ENCODE measurements at regions of chr16 and their contacts with region 1.

Region 1: DNA sequence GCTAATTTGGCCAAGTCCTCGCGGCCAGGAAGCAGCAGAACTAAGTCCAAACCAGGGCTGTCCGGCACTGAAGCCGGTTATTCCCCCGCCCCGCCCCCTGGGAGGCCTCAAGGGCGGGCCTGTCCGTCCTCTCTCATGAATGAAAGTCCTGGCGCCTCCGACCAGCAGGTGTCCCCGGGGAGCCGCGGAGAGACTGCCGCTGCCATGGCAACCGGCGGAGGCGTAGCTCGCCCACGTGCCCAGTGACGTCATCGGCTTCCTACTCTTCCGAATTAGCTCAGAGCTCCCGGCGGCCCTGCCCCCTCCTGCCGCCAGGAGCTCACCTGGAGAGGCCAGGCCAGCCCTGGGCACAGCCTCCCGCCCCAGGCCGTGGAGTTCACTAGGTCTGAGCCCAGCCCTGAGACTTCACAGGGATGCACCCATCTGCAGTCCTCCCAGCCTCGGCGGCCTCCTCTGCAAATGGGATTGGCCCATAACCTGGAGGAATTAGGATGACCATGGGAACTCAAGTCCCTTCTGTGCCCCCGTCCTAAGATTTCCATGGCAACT is 1.3 kb downstream of the SPATA2L start:
- DNase-seq: peak; percentile 99
- H3K4me3 Mint-ChIP-seq: peak overlapping the region; percentile 86
- H3K27ac Mint-ChIP-seq: peak overlapping the region; percentile 87
- H3K4me1 Mint-ChIP-seq: peaks cover 14% of the 10 kb centered on the region
- H3K27me3 Mint-ChIP-seq: no peaks in the 10 kb centered on the region

Region 2: GRCh38 chr16:89241187-89242007 is 458.8 kb before region 1 on chr16:
- intact Hi-C with region 1: loop called (anchors 10 kb)
- DNase-seq: peak; percentile 93
- H3K4me3 Mint-ChIP-seq: peak overlapping the region; percentile 100
- H3K27ac Mint-ChIP-seq: peak overlapping the region; percentile 100
- H3K4me1 Mint-ChIP-seq: peaks cover 15% of the 10 kb centered on the region
- H3K27me3 Mint-ChIP-seq: no peaks in the 10 kb centered on the region

Region 3: DNA sequence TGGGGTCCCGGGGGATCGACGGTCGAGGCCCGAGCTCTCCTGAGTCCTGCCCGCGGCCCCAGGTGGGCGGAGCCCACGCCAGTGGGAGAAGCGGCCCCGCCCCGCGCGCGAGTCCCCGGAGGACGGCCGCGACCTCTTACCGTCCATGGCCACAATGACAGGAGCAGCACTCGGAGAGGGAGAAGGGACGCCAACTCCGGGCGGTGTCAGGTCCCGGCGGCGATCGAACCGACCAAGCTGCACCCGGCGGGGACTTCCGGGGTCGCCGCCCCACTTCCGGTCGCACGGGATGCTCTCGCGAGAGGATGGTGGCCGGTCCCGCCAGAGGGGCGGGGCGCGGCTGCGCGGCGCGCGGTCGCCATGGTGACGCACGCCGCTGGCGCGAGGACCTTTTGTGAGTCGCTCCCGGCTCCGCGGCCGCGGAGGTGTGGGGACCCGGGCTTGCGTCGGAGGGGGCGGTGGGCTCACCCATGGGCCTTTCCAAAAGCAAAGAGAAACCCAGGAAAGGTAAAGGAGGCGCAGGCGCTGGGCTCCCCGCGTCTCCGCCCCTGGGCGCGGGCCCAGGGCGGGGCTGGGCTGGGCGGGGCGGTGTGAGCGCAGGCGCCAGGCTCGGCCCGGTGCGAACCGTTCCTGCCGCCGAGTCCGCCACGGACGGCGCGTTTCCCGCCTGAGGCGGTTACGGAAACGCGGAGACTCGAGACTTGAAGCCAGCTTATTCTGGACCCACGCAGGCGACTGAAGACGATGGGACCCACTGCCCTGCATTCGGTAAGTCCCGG is 42.5 kb before region 1 on chr16 and contains the starts of genes CHMP1A and SPATA33:
- intact Hi-C with region 1: loop called (anchors 1 kb)
- DNase-seq: peak; percentile 98
- H3K4me3 Mint-ChIP-seq: peak within 1 kb of the TSS; percentile 97
- H3K27ac Mint-ChIP-seq: peak within 1 kb of the TSS; percentile 92
- H3K4me1 Mint-ChIP-seq: peaks cover 33% of the 10 kb centered on the region
- H3K27me3 Mint-ChIP-seq: no peaks in the 10 kb centered on the region
- total RNA-seq, gene CHMP1A: 83.7 and 84.3 TPM in 2 replicates
- total RNA-seq, gene SPATA33: 14.6 and 17.2 TPM in 2 replicates

Region 4: DNA sequence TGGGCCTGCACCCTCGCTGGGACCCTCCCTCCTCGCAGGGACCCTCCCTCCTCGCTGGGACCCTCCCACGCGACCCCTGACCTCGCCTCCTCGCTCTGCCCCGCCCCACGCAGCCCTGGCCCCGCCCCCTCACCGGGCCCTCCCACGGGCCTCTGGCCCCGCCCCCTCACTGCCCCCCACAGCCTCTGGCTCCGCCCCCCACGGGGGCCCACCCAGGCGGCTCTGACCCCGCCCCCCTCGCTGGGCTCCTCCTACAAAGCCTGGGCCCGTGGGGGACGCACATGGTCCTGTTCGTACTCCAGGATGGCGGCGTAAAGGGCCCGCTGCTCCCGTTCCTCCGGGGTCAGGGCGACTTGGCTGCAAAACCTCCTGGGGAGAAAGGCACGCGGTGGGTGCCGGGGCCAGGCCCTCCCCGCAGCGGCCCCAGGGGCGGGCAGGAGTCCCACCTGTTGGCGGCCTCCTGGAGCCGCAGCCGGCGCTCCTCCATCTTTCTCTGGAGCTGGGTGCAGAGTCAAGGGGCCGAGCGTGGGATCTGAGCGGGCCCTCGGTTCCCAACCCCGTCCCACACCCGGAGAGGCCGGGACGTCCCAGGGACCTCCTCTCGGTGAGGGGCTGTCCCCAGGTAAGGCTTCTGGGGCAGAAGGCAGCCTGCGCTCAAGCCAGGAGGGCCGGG is 11.6 kb after region 1 on chr16:
- intact Hi-C with region 1: loop called (anchors 1 kb)
- DNase-seq: peak; percentile 93
- H3K4me3 Mint-ChIP-seq: peak overlapping the region; percentile 85
- H3K27ac Mint-ChIP-seq: peak overlapping the region; percentile 85
- H3K4me1 Mint-ChIP-seq: peaks cover 4% of the 10 kb centered on the region
- H3K27me3 Mint-ChIP-seq: no peaks in the 10 kb centered on the region

Region 5: DNA sequence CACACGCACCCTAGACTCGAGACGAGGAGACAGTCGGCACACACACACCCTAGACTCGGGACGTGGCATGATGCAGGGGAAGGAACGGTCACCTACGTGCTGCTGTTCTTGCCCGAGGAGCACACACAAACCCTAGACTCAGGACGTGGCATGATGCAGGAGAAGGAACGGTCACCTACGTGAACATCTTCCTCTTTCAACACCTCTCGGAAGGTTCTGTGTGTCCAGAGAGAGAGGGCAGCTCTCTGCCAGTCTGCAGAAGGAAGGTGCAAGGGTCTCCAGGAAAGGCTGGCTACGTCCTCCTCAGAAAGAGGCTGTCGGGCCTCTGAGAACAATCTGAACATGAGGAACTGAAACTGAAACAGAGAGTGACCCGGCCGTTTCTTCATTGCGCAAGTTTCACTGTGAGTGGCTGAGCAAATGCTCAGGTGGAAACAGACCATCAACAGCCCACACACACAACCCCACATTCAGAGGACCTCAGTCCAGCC is 64.6 kb after region 1 on chr16:
- intact Hi-C with region 1: loop called (anchors 10 kb)
- DNase-seq: peak; percentile 77
- H3K4me3 Mint-ChIP-seq: peak overlapping the region; percentile 71
- H3K27ac Mint-ChIP-seq: peak overlapping the region; percentile 81
- H3K4me1 Mint-ChIP-seq: peaks cover 38% of the 10 kb centered on the region
- H3K27me3 Mint-ChIP-seq: no peaks in the 10 kb centered on the region

Region 6: GRCh38 chr16:89801800-89802199 is 101.6 kb after region 1 on chr16:
- intact Hi-C with region 1: no loop called
- DNase-seq: no peak
- H3K4me3 Mint-ChIP-seq: no peak overlapping the region
- H3K27ac Mint-ChIP-seq: no peak overlapping the region
- H3K4me1 Mint-ChIP-seq: no peaks in the 10 kb centered on the region
- H3K27me3 Mint-ChIP-seq: no peaks in the 10 kb centered on the region

Region 7: GRCh38 chr16:89860747-89861304 is 160.7 kb after region 1 on chr16:
- intact Hi-C with region 1: loop called (anchors 1 kb)
- DNase-seq: peak; percentile 95
- H3K4me3 Mint-ChIP-seq: no peak overlapping the region
- H3K27ac Mint-ChIP-seq: no peak overlapping the region
- H3K4me1 Mint-ChIP-seq: peaks cover 27% of the 10 kb centered on the region
- H3K27me3 Mint-ChIP-seq: peaks cover 1% of the 10 kb centered on the region